ENCODE measurements at regions of chr1 and their contacts with region 1.

Region 1: DNA sequence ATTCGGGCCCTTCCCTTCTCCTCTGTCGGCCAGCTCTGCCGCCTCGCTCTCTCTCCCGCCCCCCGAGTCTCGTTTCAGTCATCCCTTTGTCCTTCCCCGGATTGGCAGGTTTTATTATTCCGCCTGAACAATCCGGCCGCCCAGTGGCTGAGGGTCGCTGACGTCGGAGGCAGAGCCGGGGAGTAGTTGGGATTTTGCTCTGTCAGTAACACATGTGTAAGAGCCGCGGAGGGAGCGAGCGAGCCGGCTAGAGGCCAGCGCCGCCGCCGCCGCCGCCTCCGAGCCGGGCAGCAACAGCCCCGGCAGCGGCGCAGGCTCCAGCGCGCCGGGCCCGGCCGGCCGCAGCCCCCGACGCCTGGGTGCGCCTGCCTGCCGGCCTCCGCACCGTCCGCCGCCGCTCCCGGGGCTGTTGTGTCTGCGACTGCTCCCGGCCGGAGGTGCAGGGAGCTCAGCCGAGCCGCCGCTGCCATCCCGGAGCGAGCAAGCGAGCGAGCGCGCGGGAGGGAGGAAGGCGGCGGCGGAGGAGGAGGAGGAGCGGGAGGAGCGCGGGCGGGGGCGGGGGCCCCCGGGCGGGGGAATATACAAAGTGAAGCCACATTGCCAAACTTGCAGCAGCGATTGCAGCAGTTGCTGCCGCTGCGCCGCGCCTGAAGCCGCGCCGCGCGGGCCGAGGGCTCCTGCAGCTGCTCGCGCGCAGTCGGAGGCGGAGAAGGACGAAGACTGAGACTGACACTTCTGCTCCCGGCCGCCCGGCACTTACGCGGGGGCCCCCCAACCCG is at the start of gene LMO4:
- DNase-seq: peak; percentile 69 to 95 (median 85)
- ATAC-seq: peak; percentile 70
- H3K4me3 ChIP-seq: peak within 1 kb of the TSS; percentile 50 to 66
- H3K4me3 Mint-ChIP-seq: peak within 1 kb of the TSS; percentile 95
- H3K27ac ChIP-seq: peak within 1 kb of the TSS; percentile 66 to 79
- H3K27ac Mint-ChIP-seq: peak within 1 kb of the TSS; percentile 95
- H3K4me1 ChIP-seq: peaks cover 28% of the 10 kb centered on the region
- H3K4me1 Mint-ChIP-seq: peaks cover 46% of the 10 kb centered on the region
- H3K27me3 ChIP-seq: no peaks in the 10 kb centered on the region
- H3K27me3 Mint-ChIP-seq: no peaks in the 10 kb centered on the region
- CTCF ChIP-seq: no peak
- total RNA-seq, gene LMO4: 16.8 to 17.6 TPM

Region 2: DNA sequence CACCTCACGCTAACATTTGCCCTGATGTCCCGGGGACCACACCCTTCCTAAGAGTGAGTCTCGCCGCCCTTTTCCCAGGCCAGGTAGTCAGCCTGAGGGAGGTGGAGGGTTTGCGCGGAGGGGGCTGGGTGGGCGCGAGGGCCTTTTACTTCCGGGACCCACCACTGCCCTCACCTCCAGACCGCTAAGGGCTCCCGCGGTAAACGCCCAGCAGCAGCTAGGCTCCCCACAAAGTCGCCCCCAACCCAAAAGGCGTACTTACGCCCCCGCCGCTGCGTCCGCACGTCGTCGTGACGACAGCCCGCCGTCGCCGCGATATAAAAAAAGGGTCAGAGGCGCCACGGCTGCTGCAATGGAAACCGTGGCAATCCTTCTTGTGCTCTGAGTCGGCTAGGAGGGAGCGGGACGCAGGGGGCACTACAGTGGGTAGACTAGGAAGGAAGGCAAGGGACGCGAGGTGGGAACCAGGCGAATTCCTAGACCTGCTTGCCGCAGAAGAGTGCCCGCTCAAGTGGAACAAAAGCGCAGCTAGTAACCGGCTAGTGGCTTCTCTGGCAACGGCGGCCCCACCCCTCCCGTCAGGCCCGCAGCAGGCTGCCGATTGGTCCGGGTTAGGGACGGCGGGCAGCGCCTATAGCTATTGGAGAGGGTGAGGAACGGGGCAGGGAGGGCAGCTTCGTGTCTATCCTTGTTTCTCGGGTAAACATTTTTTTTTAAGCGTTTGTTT is 932.5 kb before region 1 on chr1 and contains the start of gene ODF2L:
- CTCF ChIA-PET with region 1: no interaction called
- POLR2A ChIA-PET with region 1: no interaction called
- intact Hi-C with region 1: loop called (anchors 5 kb)
- DNase-seq: peak; percentile 74 to 91 (median 89)
- ATAC-seq: peak; percentile 98
- H3K4me3 ChIP-seq: peak within 1 kb of the TSS; percentile 91 to 97
- H3K4me3 Mint-ChIP-seq: peak within 1 kb of the TSS; percentile 99
- H3K27ac ChIP-seq: peak within 1 kb of the TSS; percentile 85 to 91
- H3K27ac Mint-ChIP-seq: peak within 1 kb of the TSS; percentile 97
- H3K4me1 ChIP-seq: peaks cover 16% of the 10 kb centered on the region
- H3K4me1 Mint-ChIP-seq: peaks cover 53% of the 10 kb centered on the region
- H3K27me3 ChIP-seq: no peaks in the 10 kb centered on the region
- H3K27me3 Mint-ChIP-seq: no peaks in the 10 kb centered on the region
- CTCF ChIP-seq: no peak
- total RNA-seq, gene ODF2L: 49.3 to 49.6 TPM

Region 3: DNA sequence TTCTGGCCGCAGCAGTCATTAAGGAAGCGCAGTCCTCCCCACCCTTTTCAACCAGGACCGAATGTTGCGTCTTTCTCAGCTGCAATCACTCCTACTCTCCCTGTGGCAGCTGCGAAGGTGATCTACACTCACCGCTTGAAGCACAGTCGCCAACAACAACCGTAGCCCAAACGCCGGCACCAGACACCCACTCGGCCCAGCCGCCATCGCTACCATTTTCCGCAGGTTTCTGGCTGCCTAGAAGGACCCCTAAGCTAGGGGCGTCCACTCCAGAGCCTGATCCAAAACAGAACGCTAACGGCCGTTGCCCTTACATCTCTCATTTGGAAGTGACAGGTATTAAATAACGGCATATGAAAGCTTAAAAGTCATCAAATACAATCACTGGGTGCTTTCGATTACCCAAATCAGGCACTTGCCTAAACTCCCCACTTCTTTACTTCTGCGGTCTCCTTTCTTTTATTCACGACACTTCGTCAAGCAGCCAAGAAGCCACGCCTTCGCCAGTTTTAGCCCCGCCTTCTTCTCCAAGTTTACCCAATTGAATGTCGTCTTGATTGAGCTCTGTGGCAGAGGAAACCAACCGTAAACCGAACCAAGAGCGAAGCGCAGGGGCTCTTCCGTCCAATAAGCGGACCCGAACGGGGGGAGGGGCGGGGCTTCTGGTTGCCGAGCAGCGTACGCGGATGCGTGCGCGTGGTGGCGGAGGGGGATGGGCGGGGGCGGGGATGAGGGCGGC is 414.4 kb before region 1 on chr1 and contains the start of gene SELENOF:
- CTCF ChIA-PET with region 1: interaction called, 3 read pairs
- POLR2A ChIA-PET with region 1: interaction called, 3 read pairs
- intact Hi-C with region 1: loop called in 1 of 2 experiments (anchors 5 kb)
- DNase-seq: peak; percentile 97 to 100 (median 99)
- ATAC-seq: peak; percentile 85
- H3K4me3 ChIP-seq: peak within 1 kb of the TSS; percentile 91 to 99
- H3K4me3 Mint-ChIP-seq: no peak within 1 kb of the TSS
- H3K27ac ChIP-seq: peak within 1 kb of the TSS; percentile 76 to 99
- H3K27ac Mint-ChIP-seq: no peak within 1 kb of the TSS
- H3K4me1 ChIP-seq: peaks cover 35% of the 10 kb centered on the region
- H3K4me1 Mint-ChIP-seq: peaks cover 50% of the 10 kb centered on the region
- H3K27me3 ChIP-seq: no peaks in the 10 kb centered on the region
- H3K27me3 Mint-ChIP-seq: no peaks in the 10 kb centered on the region
- CTCF ChIP-seq: no peak
- total RNA-seq, gene SELENOF: 74.5 to 78.6 TPM

Region 4: DNA sequence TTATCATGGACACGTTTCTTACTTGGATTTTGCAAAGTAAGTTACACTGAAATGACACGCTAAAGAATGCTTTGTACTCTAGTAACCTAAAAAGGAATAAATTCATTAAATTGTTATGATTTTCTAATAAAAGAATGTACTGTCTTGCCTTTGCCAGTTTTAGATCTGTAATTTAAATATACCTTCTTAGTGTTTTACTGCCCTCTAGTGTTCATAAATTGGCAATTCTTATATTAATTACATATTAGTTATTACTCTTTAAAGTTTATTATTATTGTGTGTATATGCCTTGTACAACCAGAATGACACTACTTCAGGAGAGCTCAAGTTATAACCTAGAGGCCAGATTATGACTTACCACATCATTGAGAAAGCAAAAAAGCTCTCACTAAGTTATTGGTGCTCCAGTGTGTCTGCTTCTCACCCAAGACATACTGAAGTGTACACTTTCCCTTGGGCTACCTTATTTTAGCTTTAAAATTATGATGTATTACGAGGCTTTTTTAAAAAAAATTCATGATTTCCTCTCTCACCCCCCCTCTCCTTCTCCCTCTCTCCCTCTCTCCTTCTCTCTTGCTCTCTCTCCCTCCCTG is 244.1 kb before region 1 on chr1:
- CTCF ChIA-PET with region 1: no interaction called
- POLR2A ChIA-PET with region 1: no interaction called
- intact Hi-C with region 1: no loop called
- DNase-seq: peak in 2 of 9 experiments; percentile 33 to 53
- ATAC-seq: peak; percentile 46
- H3K4me3 ChIP-seq: no peak overlapping the region
- H3K4me3 Mint-ChIP-seq: no peak overlapping the region
- H3K27ac ChIP-seq: no peak overlapping the region
- H3K27ac Mint-ChIP-seq: no peak overlapping the region
- H3K4me1 ChIP-seq: no peaks in the 10 kb centered on the region
- H3K4me1 Mint-ChIP-seq: peaks cover 4% of the 10 kb centered on the region
- H3K27me3 ChIP-seq: no peaks in the 10 kb centered on the region
- H3K27me3 Mint-ChIP-seq: no peaks in the 10 kb centered on the region
- CTCF ChIP-seq: peak; percentile 79

Region 5: DNA sequence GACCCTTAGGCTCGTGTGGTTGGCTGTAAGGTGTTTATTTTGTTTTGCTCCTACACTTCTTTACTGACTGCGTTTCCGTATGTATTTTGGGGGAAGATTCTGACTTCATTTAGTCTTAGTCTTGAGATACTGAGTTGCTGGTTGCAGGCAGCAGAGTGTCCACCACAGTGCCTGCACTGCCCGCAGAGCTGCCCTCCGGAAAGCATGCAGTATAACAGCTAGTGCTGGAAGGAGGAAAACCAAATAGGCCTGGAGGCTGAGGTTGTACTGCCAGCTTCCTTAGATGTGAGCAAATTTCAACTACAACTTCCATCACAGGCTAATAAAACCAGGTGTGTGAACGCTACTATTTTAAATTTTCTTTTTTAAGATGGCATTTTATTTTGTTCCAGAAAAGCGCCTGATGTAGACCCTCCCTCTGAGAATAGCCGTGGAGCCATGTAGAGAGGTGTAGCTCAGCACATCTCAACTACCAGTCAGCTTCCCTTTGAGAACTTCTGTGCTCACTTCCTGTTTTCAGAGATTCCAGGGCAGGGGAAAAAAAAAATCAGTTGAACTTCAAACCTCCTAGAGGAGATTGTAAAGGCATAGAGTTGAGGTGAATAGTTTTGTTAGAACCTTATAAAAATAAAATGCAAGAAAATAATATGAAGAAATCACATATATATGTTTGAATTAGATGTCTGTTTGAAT is 17.8 kb after region 1 on chr1:
- CTCF ChIA-PET with region 1: interaction called, 5 read pairs
- POLR2A ChIA-PET with region 1: interaction called, 3 read pairs
- intact Hi-C with region 1: loop called in 1 of 2 experiments (anchors 2 kb)
- DNase-seq: no peak
- ATAC-seq: no peak
- H3K4me3 ChIP-seq: no peak overlapping the region
- H3K4me3 Mint-ChIP-seq: no peak overlapping the region
- H3K27ac ChIP-seq: no peak overlapping the region
- H3K27ac Mint-ChIP-seq: no peak overlapping the region
- H3K4me1 ChIP-seq: no peaks in the 10 kb centered on the region
- H3K4me1 Mint-ChIP-seq: no peaks in the 10 kb centered on the region
- H3K27me3 ChIP-seq: no peaks in the 10 kb centered on the region
- H3K27me3 Mint-ChIP-seq: no peaks in the 10 kb centered on the region
- CTCF ChIP-seq: no peak

Region 6: DNA sequence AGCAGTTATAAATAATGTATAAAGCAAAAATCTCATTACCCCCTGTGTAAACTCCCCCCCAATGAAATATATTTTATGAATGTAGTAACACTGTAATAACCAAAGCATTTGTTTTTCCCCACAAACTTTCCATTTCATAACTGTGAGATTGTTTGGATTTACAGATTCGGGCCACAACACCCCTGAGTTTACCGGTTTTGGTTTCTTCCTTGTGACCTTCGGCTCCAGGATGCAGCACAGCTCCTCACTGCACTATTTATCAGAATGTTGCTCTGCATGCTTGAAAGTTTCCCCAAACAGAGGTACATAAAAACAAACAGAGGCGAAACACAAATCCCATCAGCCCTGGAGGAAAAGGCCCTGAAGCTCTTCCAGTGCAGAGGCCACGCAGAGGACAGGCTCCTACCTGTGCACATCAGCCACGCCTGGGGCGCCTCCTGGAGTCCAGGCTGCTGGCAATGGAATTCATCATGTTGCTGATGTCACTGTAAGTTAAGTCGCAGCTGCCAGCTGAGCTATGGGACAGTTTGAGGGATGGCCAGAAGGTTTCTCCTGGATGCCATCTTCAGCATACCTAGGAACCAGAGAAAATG is 122.2 kb after region 1 on chr1:
- CTCF ChIA-PET with region 1: interaction called, 4 read pairs
- POLR2A ChIA-PET with region 1: no interaction called
- intact Hi-C with region 1: loop called in 1 of 2 experiments (anchors 1 kb)
- DNase-seq: peak in 6 of 9 experiments; percentile 9 to 37 (median 26)
- ATAC-seq: no peak
- H3K4me3 ChIP-seq: no peak overlapping the region
- H3K4me3 Mint-ChIP-seq: no peak overlapping the region
- H3K27ac ChIP-seq: no peak overlapping the region
- H3K27ac Mint-ChIP-seq: no peak overlapping the region
- H3K4me1 ChIP-seq: no peaks in the 10 kb centered on the region
- H3K4me1 Mint-ChIP-seq: peaks cover 7% of the 10 kb centered on the region
- H3K27me3 ChIP-seq: no peaks in the 10 kb centered on the region
- H3K27me3 Mint-ChIP-seq: no peaks in the 10 kb centered on the region
- CTCF ChIP-seq: no peak

Region 7: GRCh38 chr1:87706203-87706602 is 377.7 kb after region 1 on chr1:
- CTCF ChIA-PET with region 1: no interaction called
- POLR2A ChIA-PET with region 1: no interaction called
- intact Hi-C with region 1: no loop called
- DNase-seq: no peak
- ATAC-seq: no peak
- H3K4me3 ChIP-seq: no peak overlapping the region
- H3K4me3 Mint-ChIP-seq: no peak overlapping the region
- H3K27ac ChIP-seq: no peak overlapping the region
- H3K27ac Mint-ChIP-seq: no peak overlapping the region
- H3K4me1 ChIP-seq: no peaks in the 10 kb centered on the region
- H3K4me1 Mint-ChIP-seq: no peaks in the 10 kb centered on the region
- H3K27me3 ChIP-seq: no peaks in the 10 kb centered on the region
- H3K27me3 Mint-ChIP-seq: no peaks in the 10 kb centered on the region
- CTCF ChIP-seq: no peak

Region 8: DNA sequence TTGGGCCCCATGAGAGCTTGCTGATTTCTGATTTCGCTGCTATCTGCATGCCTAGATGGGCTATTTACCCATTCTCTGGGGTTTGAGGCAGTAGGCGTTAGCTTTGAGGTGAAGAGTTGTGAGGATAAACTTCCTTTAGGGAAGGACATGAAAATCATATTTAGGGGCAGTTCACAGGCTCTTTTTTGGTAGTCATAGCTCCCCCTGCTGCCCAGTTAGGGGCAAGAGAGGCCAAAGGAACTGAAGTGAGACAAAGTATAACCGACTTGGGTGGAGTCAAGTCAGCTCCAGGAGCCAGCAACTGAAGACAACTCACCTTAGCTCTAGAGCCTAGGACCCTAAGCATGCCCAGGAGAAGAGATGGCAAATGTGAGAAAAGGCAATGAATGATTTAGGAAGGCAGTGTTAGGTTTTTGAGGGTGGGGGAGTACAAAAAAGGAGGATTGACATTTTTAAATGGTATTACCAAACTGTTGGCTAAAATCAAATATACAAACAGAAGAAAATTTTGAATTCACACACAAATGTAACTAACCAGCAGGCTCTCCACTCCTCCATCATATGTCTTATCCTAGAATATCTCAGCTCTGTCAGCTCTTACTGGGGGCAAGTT is 625.4 kb after region 1 on chr1:
- CTCF ChIA-PET with region 1: interaction called, 28 read pairs
- POLR2A ChIA-PET with region 1: interaction called, 5 read pairs
- intact Hi-C with region 1: loop called (anchors 1 to 10 kb)
- DNase-seq: peak; percentile 10 to 68 (median 48)
- ATAC-seq: peak; percentile 46
- H3K4me3 ChIP-seq: no peak overlapping the region
- H3K4me3 Mint-ChIP-seq: no peak overlapping the region
- H3K27ac ChIP-seq: no peak overlapping the region
- H3K27ac Mint-ChIP-seq: no peak overlapping the region
- H3K4me1 ChIP-seq: no peaks in the 10 kb centered on the region
- H3K4me1 Mint-ChIP-seq: no peaks in the 10 kb centered on the region
- H3K27me3 ChIP-seq: no peaks in the 10 kb centered on the region
- H3K27me3 Mint-ChIP-seq: peaks cover 14% of the 10 kb centered on the region
- CTCF ChIP-seq: peak; percentile 67

Region 9: GRCh38 chr1:88891318-88891950 is 1563.0 kb after region 1 on chr1 and contains the start of gene GTF2B:
- CTCF ChIA-PET with region 1: no interaction called
- POLR2A ChIA-PET with region 1: no interaction called
- intact Hi-C with region 1: loop called (anchors 5 to 10 kb)
- DNase-seq: peak; percentile 86 to 99 (median 94)
- ATAC-seq: peak; percentile 90
- H3K4me3 ChIP-seq: peak within 1 kb of the TSS; percentile 89 to 92
- H3K4me3 Mint-ChIP-seq: peak within 1 kb of the TSS; percentile 92
- H3K27ac ChIP-seq: peak within 1 kb of the TSS; percentile 92 to 93
- H3K27ac Mint-ChIP-seq: peak within 1 kb of the TSS; percentile 95
- H3K4me1 ChIP-seq: peaks cover 35% of the 10 kb centered on the region
- H3K4me1 Mint-ChIP-seq: peaks cover 45% of the 10 kb centered on the region
- H3K27me3 ChIP-seq: no peaks in the 10 kb centered on the region
- H3K27me3 Mint-ChIP-seq: no peaks in the 10 kb centered on the region
- CTCF ChIP-seq: no peak
- total RNA-seq, gene GTF2B: 85.4 to 91.3 TPM